ENCODE measurements at regions of chr5 and their contacts with region 1.

Region 1: GRCh38 chr5:177403792-177404640 is 3.6 kb upstream of the PFN3 start:
- DNase-seq: peak; percentile 76 to 95 (median 84)
- ATAC-seq: peak; percentile 73
- H3K4me3 ChIP-seq: peak overlapping the region; percentile 59
- H3K4me3 Mint-ChIP-seq: peak overlapping the region; percentile 87
- H3K27ac ChIP-seq: no peak overlapping the region
- H3K27ac Mint-ChIP-seq: no peak overlapping the region
- H3K4me1 ChIP-seq: peaks cover 41% of the 10 kb centered on the region
- H3K4me1 Mint-ChIP-seq: peaks cover 26% of the 10 kb centered on the region
- H3K27me3 ChIP-seq: peaks cover 0 to 2% of the 10 kb centered on the region in 2 experiments
- H3K27me3 Mint-ChIP-seq: no peaks in the 10 kb centered on the region
- CTCF ChIP-seq: peak; percentile 74

Region 2: GRCh38 chr5:177317959-177318377 is 86.0 kb before region 1 on chr5:
- CTCF ChIA-PET with region 1: interaction called, 13 read pairs
- POLR2A ChIA-PET with region 1: interaction called, 4 read pairs
- intact Hi-C with region 1: loop called in 1 of 2 experiments (anchors 1 kb)
- DNase-seq: peak; percentile 58 to 87 (median 70)
- ATAC-seq: peak; percentile 86
- H3K4me3 ChIP-seq: no peak overlapping the region
- H3K4me3 Mint-ChIP-seq: no peak overlapping the region
- H3K27ac ChIP-seq: no peak overlapping the region
- H3K27ac Mint-ChIP-seq: no peak overlapping the region
- H3K4me1 ChIP-seq: peaks cover 16% of the 10 kb centered on the region
- H3K4me1 Mint-ChIP-seq: peaks cover 22% of the 10 kb centered on the region
- H3K27me3 ChIP-seq: no peaks in the 10 kb centered on the region
- H3K27me3 Mint-ChIP-seq: no peaks in the 10 kb centered on the region
- CTCF ChIP-seq: peak; percentile 92

Region 3: GRCh38 chr5:177390363-177391300 is 13.4 kb before region 1 on chr5:
- CTCF ChIA-PET with region 1: interaction called, 136 read pairs
- POLR2A ChIA-PET with region 1: interaction called, 72 read pairs
- intact Hi-C with region 1: loop called (anchors 1 kb)
- DNase-seq: peak; percentile 80 to 94 (median 84)
- ATAC-seq: peak; percentile 76
- H3K4me3 ChIP-seq: no peak overlapping the region
- H3K4me3 Mint-ChIP-seq: peak overlapping the region; percentile 52
- H3K27ac ChIP-seq: peak overlapping the region; percentile 29 to 72
- H3K27ac Mint-ChIP-seq: peak overlapping the region; percentile 80
- H3K4me1 ChIP-seq: peaks cover 59% of the 10 kb centered on the region
- H3K4me1 Mint-ChIP-seq: peaks cover 35% of the 10 kb centered on the region
- H3K27me3 ChIP-seq: no peaks in the 10 kb centered on the region
- H3K27me3 Mint-ChIP-seq: no peaks in the 10 kb centered on the region
- CTCF ChIP-seq: peak; percentile 95

Region 4: DNA sequence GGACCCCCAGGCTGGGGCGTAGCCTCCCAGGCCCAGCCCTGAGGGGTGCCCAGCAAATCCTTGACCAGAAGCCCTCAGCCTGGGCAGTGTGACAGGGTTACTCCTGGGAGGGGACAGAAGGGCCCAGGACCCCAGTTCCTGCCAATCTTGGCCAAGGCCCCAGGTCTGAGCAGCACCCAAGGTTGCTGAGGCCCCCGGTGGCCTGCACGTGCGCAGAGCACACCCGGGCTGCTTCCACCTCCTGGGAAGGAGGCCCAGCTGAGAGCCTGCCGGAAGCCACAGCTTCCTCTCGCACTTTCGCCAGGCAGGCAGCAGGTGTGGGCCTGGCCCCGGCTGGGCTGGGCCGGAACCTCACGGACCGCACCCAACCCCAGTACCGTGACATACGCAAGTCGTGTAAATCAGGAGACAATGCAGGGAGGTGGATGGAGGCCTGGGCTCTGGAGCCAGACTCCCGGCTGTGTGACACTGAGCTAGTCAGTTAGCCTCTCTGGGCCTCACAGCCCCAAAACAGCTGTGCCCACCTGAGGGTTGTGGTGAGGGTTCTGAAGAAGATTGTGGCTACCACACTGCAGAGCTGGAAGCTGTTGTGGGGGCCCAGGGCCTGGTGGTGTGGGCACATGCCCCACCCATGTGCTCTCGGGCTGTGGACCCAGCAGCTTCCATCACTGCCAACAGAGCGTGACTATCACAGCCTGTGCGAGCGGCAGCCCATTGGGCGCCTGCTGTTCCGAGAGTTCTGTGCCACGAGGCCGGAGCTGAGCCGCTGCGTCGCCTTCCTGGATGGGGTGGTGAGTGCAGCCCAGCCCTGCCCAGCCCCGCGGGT is 27.5 kb after region 1 on chr5:
- CTCF ChIA-PET with region 1: interaction called, 68 read pairs
- POLR2A ChIA-PET with region 1: interaction called, 250 read pairs
- intact Hi-C with region 1: loop called in 1 of 2 experiments (anchors 1 kb)
- DNase-seq: peak in 12 of 14 experiments; percentile 45 to 93 (median 70)
- ATAC-seq: peak; percentile 43
- H3K4me3 ChIP-seq: peak overlapping the region; percentile 65
- H3K4me3 Mint-ChIP-seq: peak overlapping the region; percentile 95
- H3K27ac ChIP-seq: peak overlapping the region; percentile 87 to 92
- H3K27ac Mint-ChIP-seq: peak overlapping the region; percentile 96
- H3K4me1 ChIP-seq: peaks cover 96% of the 10 kb centered on the region
- H3K4me1 Mint-ChIP-seq: peaks cover 62% of the 10 kb centered on the region
- H3K27me3 ChIP-seq: no peaks in the 10 kb centered on the region
- H3K27me3 Mint-ChIP-seq: no peaks in the 10 kb centered on the region
- CTCF ChIP-seq: no peak

Region 5: GRCh38 chr5:177446200-177447065 is 42.4 kb after region 1 on chr5 and contains the start of gene PRR7:
- CTCF ChIA-PET with region 1: interaction called, 352 read pairs
- POLR2A ChIA-PET with region 1: interaction called, 435 read pairs
- intact Hi-C with region 1: loop called in 1 of 2 experiments (anchors 2 kb)
- DNase-seq: peak; percentile 56 to 93 (median 72)
- ATAC-seq: peak; percentile 43
- H3K4me3 ChIP-seq: peak within 1 kb of the TSS; percentile 56
- H3K4me3 Mint-ChIP-seq: peak within 1 kb of the TSS; percentile 80
- H3K27ac ChIP-seq: peak within 1 kb of the TSS; percentile 73 to 89
- H3K27ac Mint-ChIP-seq: peak within 1 kb of the TSS; percentile 88
- H3K4me1 ChIP-seq: peaks cover 73% of the 10 kb centered on the region
- H3K4me1 Mint-ChIP-seq: peaks cover 56% of the 10 kb centered on the region
- H3K27me3 ChIP-seq: no peaks in the 10 kb centered on the region
- H3K27me3 Mint-ChIP-seq: no peaks in the 10 kb centered on the region
- CTCF ChIP-seq: no peak
- total RNA-seq, gene PRR7: 23.3 to 23.5 TPM

Region 6: GRCh38 chr5:177497292-177498033 is 93.4 kb after region 1 on chr5 and contains the start of gene PDLIM7:
- CTCF ChIA-PET with region 1: interaction called, 27 read pairs
- POLR2A ChIA-PET with region 1: interaction called, 6 read pairs
- intact Hi-C with region 1: no loop called
- DNase-seq: peak; percentile 87 to 98 (median 94)
- ATAC-seq: peak; percentile 89
- H3K4me3 ChIP-seq: peak within 1 kb of the TSS; percentile 70
- H3K4me3 Mint-ChIP-seq: peak within 1 kb of the TSS; percentile 74
- H3K27ac ChIP-seq: no peak within 1 kb of the TSS
- H3K27ac Mint-ChIP-seq: no peak within 1 kb of the TSS
- H3K4me1 ChIP-seq: peaks cover 50% of the 10 kb centered on the region
- H3K4me1 Mint-ChIP-seq: peaks cover 31% of the 10 kb centered on the region
- H3K27me3 ChIP-seq: no peaks in the 10 kb centered on the region
- H3K27me3 Mint-ChIP-seq: no peaks in the 10 kb centered on the region
- CTCF ChIP-seq: no peak
- total RNA-seq, gene PDLIM7: 5.2 to 6.0 TPM